GM12878 (cell line): ENCODE measurements at regions of chr1 and their contacts with region 1.

Region 1: DNA sequence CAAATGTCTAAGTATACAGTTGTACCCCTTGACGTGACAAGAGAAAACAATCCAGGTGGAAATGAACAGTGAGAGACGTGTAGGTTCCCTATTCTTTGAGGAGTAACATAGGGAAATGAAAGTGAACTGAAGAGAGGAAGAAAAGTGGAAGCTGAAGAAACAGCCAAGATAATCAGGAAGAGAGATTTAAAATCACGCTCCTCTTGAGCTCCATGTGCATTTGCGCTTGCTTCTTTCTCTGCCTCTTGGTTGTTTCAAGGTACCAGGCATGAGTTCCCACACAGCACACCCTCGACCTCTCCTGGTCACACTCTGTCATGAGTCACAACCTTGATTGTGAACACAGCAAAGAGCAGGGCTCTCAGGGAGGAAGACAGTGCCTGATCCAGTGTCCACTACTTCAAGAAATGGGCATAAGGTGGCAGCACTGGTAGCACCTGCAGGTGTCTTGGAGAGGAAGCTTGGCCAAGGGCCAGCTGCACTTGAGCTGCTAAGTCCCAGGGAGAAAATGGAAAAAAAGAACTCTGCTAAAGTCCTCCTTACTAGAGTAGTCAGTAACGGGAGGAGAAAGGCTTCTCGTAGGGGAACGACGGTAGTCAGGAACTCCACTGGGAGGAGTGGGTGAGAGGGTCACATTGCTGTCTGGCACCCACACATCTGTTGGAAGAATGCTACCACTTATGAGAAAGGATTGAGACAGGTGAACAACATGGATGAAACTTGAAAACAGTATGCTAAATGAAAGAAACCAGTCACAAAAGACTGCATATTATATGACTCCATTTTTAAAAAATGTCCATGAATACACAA is 18.3 kb upstream of the ARID1A start:
- DNase-seq: peak; percentile 87
- ATAC-seq: peak; percentile 99
- H3K4me3 ChIP-seq: no peak overlapping the region
- H3K27ac ChIP-seq: peak overlapping the region; percentile 11; the same call in 1 of the 2 replicates
- H3K4me1 ChIP-seq: peaks cover 10% of the 10 kb centered on the region
- H3K27me3 ChIP-seq: no peaks in the 10 kb centered on the region
- CTCF ChIP-seq: peak; percentile 71 to 84 (median 73)
- EP300 ChIP-seq: no peak
- POLR2A ChIP-seq: no peak
- RAD21 ChIP-seq: peak; percentile 84

Region 2: DNA sequence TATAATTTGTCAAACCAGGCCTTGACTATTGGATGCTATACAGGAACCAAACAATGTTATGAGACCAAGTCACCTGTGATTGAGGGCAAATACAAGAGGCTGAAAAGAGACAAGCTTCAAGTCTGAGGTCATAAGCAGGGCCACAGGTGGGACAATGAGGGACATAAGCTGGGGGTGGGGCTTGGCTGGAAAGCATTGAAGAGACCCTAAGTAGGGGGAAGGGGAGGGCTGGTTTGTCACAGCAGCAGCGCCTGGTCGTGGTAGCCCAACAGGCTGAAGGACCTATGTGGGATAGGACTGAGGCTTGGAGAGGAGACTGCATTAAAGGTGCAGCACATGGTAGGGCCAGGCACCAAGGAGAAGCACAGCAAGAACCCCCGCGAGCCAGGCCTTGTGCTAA is 187.4 kb before region 1 on chr1:
- CTCF ChIA-PET with region 1: no interaction called
- POLR2A ChIA-PET with region 1: no interaction called
- RAD21 ChIA-PET with region 1: no interaction called
- SMC1A ChIA-PET with region 1: no interaction called
- in situ Hi-C with region 1: no loop called
- intact Hi-C with region 1: no loop called
- DNase-seq: no peak
- ATAC-seq: no peak
- H3K4me3 ChIP-seq: no peak overlapping the region
- H3K27ac ChIP-seq: no peak overlapping the region
- H3K4me1 ChIP-seq: peaks cover 11% of the 10 kb centered on the region
- H3K27me3 ChIP-seq: no peaks in the 10 kb centered on the region
- CTCF ChIP-seq: no peak
- EP300 ChIP-seq: no peak
- POLR2A ChIP-seq: no peak
- RAD21 ChIP-seq: no peak

Region 3: DNA sequence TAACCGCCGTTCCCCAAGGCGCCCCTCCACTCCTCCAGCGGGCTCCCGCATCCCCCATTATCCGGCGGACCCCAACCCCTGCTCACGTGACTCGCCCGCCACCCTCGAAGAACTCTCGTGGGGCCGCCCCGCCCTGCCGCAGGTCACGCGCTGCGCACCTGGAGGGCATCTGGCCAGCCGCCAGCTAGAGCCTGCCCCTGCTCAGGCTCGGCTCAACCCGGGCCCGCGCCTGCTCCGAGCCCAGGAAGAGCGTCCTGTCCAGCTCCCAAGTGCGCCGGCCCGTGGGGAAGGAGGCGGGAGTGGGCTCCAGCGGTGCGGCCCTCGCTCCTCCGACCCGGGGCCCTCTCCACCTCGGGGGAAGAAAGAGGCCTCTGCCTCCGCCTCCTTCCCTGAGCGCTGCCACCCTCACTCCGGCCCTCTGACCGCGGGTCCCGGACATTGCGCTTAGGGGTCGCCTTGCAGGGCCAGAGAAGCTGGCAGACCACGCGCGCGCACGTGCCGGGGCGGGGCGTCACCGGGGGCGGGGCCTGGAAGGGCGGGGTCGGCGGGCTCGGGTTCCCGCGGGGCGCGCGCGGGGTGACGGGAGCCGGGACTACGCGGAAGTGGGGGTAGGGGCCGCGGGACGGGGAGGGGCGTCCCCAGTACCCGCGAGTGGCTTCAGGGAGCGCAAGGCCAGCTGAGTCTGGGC is 176.9 kb before region 1 on chr1:
- CTCF ChIA-PET with region 1: interaction called, 11 read pairs
- POLR2A ChIA-PET with region 1: no interaction called
- RAD21 ChIA-PET with region 1: interaction called, 10 read pairs
- SMC1A ChIA-PET with region 1: interaction called, 8 read pairs
- in situ Hi-C with region 1: no loop called
- intact Hi-C with region 1: no loop called
- DNase-seq: peak; percentile 39
- ATAC-seq: peak; percentile 86
- H3K4me3 ChIP-seq: peak overlapping the region; percentile 89
- H3K27ac ChIP-seq: peak overlapping the region; percentile 95
- H3K4me1 ChIP-seq: peaks cover 14% of the 10 kb centered on the region
- H3K27me3 ChIP-seq: no peaks in the 10 kb centered on the region
- CTCF ChIP-seq: no peak
- EP300 ChIP-seq: peak in 1 of 2 experiments; percentile 36; a peak in 1 of 4 replicates
- POLR2A ChIP-seq: peak; percentile 97
- RAD21 ChIP-seq: no peak

Region 4: DNA sequence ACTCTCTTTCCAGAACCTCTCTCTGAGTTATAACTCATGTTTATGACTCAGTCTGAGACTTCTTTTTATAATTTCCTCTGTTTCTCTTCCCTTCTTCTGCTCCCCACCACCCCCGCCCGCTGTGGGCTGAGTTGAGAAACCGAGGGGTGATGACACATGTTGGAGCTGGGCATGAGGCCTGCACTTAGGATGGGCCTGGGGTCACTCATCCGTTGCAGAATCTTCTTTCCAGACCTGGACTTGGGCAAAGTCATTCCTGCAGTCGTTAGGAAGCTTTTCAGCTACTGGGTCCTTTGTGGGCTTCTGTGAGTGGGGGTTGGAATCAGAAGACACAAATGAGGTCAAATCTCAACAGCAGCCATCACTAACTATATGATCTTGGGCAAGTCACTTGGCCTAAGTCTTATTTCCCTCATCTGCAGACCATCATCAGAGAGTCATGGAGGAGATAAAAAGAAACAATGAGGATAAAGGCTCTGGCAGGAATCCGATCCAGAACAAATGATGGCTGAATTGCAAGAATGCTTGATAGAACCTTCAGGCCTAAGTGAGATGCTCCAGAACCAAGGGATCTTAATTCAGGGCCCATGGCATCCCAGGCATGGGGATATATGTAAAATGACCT is 94.6 kb before region 1 on chr1:
- CTCF ChIA-PET with region 1: interaction called, 10 read pairs
- POLR2A ChIA-PET with region 1: no interaction called
- RAD21 ChIA-PET with region 1: interaction called, 7 read pairs
- SMC1A ChIA-PET with region 1: no interaction called
- in situ Hi-C with region 1: no loop called
- intact Hi-C with region 1: no loop called
- DNase-seq: peak; percentile 56
- ATAC-seq: peak; percentile 67
- H3K4me3 ChIP-seq: no peak overlapping the region
- H3K27ac ChIP-seq: peak overlapping the region; percentile 87
- H3K4me1 ChIP-seq: peaks cover 56% of the 10 kb centered on the region
- H3K27me3 ChIP-seq: no peaks in the 10 kb centered on the region
- CTCF ChIP-seq: no peak
- EP300 ChIP-seq: peak in 1 of 2 experiments; percentile 70; a peak in 1 of 4 replicates
- POLR2A ChIP-seq: no peak
- RAD21 ChIP-seq: no peak

Region 5: DNA sequence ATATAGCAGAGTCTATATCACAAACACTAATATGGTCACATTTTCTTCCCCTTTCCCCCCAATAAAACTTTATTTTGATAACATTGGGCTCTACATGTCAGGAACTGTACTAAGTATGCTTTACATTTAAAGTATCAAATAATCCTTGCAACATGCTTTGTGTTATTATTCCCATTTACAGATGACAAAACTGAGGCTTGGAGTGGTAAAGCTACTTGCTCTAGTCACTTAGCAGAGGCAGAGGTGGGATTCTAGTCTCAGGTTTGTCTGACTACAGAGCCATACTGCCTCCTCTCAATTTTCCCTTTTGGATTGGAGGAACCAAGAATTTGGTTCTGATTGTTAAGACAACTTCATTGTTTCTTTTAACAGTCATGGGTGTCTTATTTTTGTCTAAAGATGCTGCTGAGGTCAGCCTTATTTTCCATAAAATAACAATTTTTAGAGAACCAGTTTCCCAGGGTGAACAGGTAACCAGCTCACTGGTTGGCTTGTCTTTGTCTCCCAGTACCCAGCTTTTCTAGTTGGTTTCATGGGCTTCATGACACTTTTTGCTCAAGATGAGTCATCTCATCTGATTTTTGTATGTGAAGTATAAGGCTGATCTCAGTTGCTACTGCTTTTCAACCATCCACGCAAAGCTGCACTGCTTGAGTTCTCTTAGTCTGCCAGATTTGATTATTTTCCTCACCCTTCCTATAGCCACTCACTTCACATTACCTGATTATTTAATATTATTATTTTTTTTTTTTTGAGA is 62.7 kb before region 1 on chr1:
- CTCF ChIA-PET with region 1: interaction called, 26 read pairs
- POLR2A ChIA-PET with region 1: interaction called, 5 read pairs
- RAD21 ChIA-PET with region 1: interaction called, 15 read pairs
- SMC1A ChIA-PET with region 1: interaction called, 33 read pairs
- in situ Hi-C with region 1: no loop called
- intact Hi-C with region 1: no loop called
- DNase-seq: no peak
- ATAC-seq: peak; percentile 46; the same call in 2 of the 3 replicates
- H3K4me3 ChIP-seq: no peak overlapping the region
- H3K27ac ChIP-seq: no peak overlapping the region
- H3K4me1 ChIP-seq: peaks cover 13% of the 10 kb centered on the region
- H3K27me3 ChIP-seq: no peaks in the 10 kb centered on the region
- CTCF ChIP-seq: no peak
- EP300 ChIP-seq: no peak
- POLR2A ChIP-seq: no peak
- RAD21 ChIP-seq: no peak

Region 6: GRCh38 chr1:26666855-26667254 is 10.7 kb before region 1 on chr1:
- CTCF ChIA-PET with region 1: interaction called, 19 read pairs
- POLR2A ChIA-PET with region 1: no interaction called
- RAD21 ChIA-PET with region 1: interaction called, 5 read pairs
- SMC1A ChIA-PET with region 1: interaction called, 12 read pairs
- in situ Hi-C with region 1: no loop called
- intact Hi-C with region 1: no loop called
- DNase-seq: no peak
- ATAC-seq: no peak
- H3K4me3 ChIP-seq: no peak overlapping the region
- H3K27ac ChIP-seq: no peak overlapping the region
- H3K4me1 ChIP-seq: no peaks in the 10 kb centered on the region
- H3K27me3 ChIP-seq: no peaks in the 10 kb centered on the region
- CTCF ChIP-seq: no peak
- EP300 ChIP-seq: no peak
- POLR2A ChIP-seq: no peak
- RAD21 ChIP-seq: no peak

Region 7: GRCh38 chr1:26700711-26701110 is 23.2 kb after region 1 on chr1:
- CTCF ChIA-PET with region 1: interaction called, 27 read pairs
- POLR2A ChIA-PET with region 1: interaction called, 11 read pairs
- RAD21 ChIA-PET with region 1: interaction called, 15 read pairs
- SMC1A ChIA-PET with region 1: interaction called, 61 read pairs
- in situ Hi-C with region 1: no loop called
- intact Hi-C with region 1: no loop called
- DNase-seq: no peak
- ATAC-seq: peak; percentile 1
- H3K4me3 ChIP-seq: peak overlapping the region; percentile 98
- H3K27ac ChIP-seq: peak overlapping the region; percentile 65
- H3K4me1 ChIP-seq: peaks cover 8% of the 10 kb centered on the region
- H3K27me3 ChIP-seq: no peaks in the 10 kb centered on the region
- CTCF ChIP-seq: no peak
- EP300 ChIP-seq: no peak
- POLR2A ChIP-seq: no peak
- RAD21 ChIP-seq: no peak

Region 8: DNA sequence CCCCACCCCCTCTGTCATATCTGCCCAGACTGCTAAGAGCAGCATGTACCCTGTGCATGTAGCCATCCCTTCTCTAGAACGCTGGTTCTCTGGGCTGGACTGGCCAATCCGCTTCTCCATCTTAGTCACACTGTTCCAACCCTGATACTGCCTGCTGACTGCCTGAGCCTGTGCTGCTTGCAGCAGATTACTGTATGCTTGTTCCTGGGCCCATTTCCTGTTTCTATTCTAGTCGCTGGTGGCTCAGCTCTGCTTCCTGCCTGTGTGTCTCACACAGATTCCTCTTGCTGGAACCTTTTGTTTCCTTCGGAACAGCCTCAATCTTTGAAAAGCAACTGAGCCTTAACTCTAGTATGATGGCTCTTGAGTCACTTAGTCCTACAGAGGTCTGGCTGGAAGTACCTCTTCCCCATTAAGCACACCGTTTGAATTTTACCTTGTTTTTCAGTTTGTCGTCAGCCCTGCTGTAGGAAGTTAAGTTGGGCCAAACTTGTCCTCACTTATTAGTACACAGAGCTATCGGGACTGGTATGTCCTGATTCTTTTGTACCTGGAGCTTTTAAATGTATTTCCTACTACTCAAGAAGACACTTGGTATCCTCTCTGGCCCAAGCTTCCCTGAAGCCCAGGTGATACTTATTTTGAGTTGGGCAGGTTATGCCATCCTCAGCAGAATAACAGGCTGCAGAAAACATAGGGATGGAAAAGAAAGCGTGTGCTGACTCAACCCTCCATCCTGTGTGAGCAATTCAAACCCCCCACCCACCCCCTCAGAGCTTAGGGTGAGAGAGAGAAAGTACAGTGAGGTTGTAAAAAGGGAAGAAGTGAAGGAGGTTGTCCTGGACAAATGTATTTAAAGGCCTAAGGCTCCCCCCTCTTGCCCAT is 66.8 kb after region 1 on chr1:
- CTCF ChIA-PET with region 1: interaction called, 20 read pairs
- POLR2A ChIA-PET with region 1: no interaction called
- RAD21 ChIA-PET with region 1: interaction called, 14 read pairs
- SMC1A ChIA-PET with region 1: interaction called, 20 read pairs
- in situ Hi-C with region 1: no loop called
- intact Hi-C with region 1: no loop called
- DNase-seq: peak; percentile 99
- ATAC-seq: peak; percentile 100
- H3K4me3 ChIP-seq: peak overlapping the region; percentile 65; the same call in 1 of the 2 replicates
- H3K27ac ChIP-seq: peak overlapping the region; percentile 96
- H3K4me1 ChIP-seq: peaks cover 47% of the 10 kb centered on the region
- H3K27me3 ChIP-seq: no peaks in the 10 kb centered on the region
- CTCF ChIP-seq: no peak
- EP300 ChIP-seq: peak in 1 of 2 experiments; percentile 80; a peak in 1 of 4 replicates
- POLR2A ChIP-seq: peak; percentile 72
- RAD21 ChIP-seq: no peak; the same call in 1 of the 2 replicates

Region 9: GRCh38 chr1:26826261-26827105 is 149.0 kb after region 1 on chr1 and contains the start of gene ZDHHC18:
- CTCF ChIA-PET with region 1: no interaction called
- POLR2A ChIA-PET with region 1: no interaction called
- RAD21 ChIA-PET with region 1: no interaction called
- SMC1A ChIA-PET with region 1: no interaction called
- in situ Hi-C with region 1: no loop called
- intact Hi-C with region 1: no loop called
- DNase-seq: no peak
- ATAC-seq: peak; percentile 78
- H3K4me3 ChIP-seq: peak within 1 kb of the TSS; percentile 86
- H3K27ac ChIP-seq: peak within 1 kb of the TSS; percentile 81
- H3K4me1 ChIP-seq: peaks cover 18% of the 10 kb centered on the region
- H3K27me3 ChIP-seq: no peaks in the 10 kb centered on the region
- CTCF ChIP-seq: peak; percentile 31 to 64 (median 54); a peak in 5 of 6 replicates
- EP300 ChIP-seq: no peak
- POLR2A ChIP-seq: peak; percentile 70
- RAD21 ChIP-seq: peak; percentile 18; the same call in 1 of the 2 replicates
- polyA plus RNA-seq, gene ZDHHC18: 0.40 to 1.2 TPM